ENCODE measurements at regions of chr5 and their contacts with region 1.

Region 1: DNA sequence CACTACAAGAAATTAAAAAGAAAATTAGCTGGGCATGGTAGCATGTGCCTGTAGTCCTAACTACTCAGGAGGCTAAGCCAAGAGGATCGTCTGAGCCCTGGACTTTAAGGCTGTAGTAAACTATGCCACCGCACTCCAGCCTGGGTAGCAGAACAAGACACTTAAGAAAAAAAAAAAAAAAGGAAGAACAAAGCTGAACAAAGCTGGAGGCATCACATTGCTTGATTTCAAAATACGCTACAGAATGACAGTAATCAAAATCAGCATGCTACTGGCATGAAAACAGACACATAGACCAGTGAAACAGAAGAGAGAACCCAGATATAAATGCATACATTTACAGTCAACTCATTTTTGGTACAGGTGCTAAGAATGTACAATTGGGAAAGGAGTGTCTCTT is 14.5 kb upstream of the OTULIN start:
- DNase-seq: no peak
- ATAC-seq: no peak
- H3K4me3 ChIP-seq: no peak overlapping the region
- H3K4me3 Mint-ChIP-seq: no peak overlapping the region
- H3K27ac ChIP-seq: no peak overlapping the region
- H3K27ac Mint-ChIP-seq: no peak overlapping the region
- H3K4me1 ChIP-seq: peaks cover 4% of the 10 kb centered on the region
- H3K4me1 Mint-ChIP-seq: peaks cover under 1% of the 10 kb centered on the region
- H3K27me3 ChIP-seq: no peaks in the 10 kb centered on the region
- H3K27me3 Mint-ChIP-seq: peaks cover 7% of the 10 kb centered on the region
- CTCF ChIP-seq: no peak

Region 2: GRCh38 chr5:14258840-14259239 is 391.2 kb before region 1 on chr5:
- CTCF ChIA-PET with region 1: no interaction called
- POLR2A ChIA-PET with region 1: no interaction called
- intact Hi-C with region 1: no loop called
- DNase-seq: peak in 1 of 9 experiments; percentile 18
- ATAC-seq: no peak
- H3K4me3 ChIP-seq: no peak overlapping the region
- H3K4me3 Mint-ChIP-seq: no peak overlapping the region
- H3K27ac ChIP-seq: no peak overlapping the region
- H3K27ac Mint-ChIP-seq: no peak overlapping the region
- H3K4me1 ChIP-seq: no peaks in the 10 kb centered on the region
- H3K4me1 Mint-ChIP-seq: no peaks in the 10 kb centered on the region
- H3K27me3 ChIP-seq: no peaks in the 10 kb centered on the region
- H3K27me3 Mint-ChIP-seq: no peaks in the 10 kb centered on the region
- CTCF ChIP-seq: no peak

Region 3: DNA sequence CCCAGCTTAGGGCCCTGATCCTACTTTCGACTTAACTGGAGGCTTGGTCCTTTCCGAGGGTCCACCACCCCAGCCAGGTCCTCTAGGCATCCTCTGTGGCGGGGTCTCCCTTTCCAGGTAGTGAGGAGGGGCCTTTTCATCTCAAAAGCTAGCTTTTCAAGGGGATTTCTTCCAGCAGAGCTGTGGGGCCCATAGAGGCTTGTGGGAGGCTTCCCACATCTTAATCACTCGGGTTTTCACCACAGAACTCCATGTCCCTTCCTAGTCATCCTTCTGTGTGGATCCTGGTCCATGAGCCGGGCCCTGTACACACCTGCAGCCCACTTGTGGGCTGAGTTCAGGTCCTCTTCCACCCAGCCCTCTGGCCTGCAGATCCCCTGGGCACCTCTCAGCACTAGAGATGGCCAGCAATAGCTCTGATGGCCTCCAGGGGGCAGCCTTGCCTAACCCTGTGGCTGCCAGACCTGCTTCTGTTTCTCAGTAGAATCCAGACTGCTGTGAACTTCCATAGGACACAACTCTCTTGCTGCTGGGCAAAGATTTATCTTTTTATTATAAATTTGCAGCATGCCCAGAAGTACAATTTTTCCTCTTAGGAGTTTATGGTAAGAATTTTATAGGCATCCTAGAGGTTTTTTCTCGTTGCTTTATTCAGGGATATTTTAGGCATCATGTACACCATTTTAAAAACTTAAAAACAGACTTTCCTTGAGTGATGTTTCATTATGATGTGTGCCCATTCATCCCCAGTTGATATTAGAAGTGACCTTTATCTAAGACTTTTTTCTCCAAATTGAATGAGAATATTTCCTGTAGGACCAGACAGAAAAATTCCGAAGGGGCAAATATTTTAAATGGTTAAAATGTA is 298.0 kb before region 1 on chr5:
- CTCF ChIA-PET with region 1: interaction called, 283 read pairs
- POLR2A ChIA-PET with region 1: no interaction called
- intact Hi-C with region 1: loop called (anchors 1 kb)
- DNase-seq: peak; percentile 26 to 76 (median 59)
- ATAC-seq: peak; percentile 95
- H3K4me3 ChIP-seq: no peak overlapping the region
- H3K4me3 Mint-ChIP-seq: no peak overlapping the region
- H3K27ac ChIP-seq: no peak overlapping the region
- H3K27ac Mint-ChIP-seq: no peak overlapping the region
- H3K4me1 ChIP-seq: no peaks in the 10 kb centered on the region
- H3K4me1 Mint-ChIP-seq: no peaks in the 10 kb centered on the region
- H3K27me3 ChIP-seq: no peaks in the 10 kb centered on the region
- H3K27me3 Mint-ChIP-seq: peaks cover 3% of the 10 kb centered on the region
- CTCF ChIP-seq: peak; percentile 87

Region 4: DNA sequence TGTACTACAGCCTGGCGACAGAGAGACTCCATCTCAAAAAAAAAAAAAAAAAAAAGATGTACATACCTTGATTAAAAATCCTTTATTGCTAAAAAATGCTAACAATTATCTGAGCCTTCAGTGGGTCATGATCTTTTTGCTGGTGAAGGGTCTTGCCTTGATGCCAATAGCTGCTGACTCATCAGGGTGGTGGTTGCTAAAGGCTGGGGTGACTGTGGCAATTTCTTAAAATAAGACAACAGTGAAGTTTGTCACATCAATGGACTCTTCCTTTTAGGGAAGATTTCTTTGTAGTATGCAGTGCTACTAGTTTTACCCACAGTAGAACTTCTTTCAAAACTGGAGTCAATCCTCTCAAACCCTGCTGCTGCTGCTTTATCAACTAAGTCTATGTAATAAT is 102.4 kb before region 1 on chr5:
- CTCF ChIA-PET with region 1: no interaction called
- POLR2A ChIA-PET with region 1: no interaction called
- intact Hi-C with region 1: no loop called
- DNase-seq: no peak
- ATAC-seq: no peak
- H3K4me3 ChIP-seq: no peak overlapping the region
- H3K4me3 Mint-ChIP-seq: no peak overlapping the region
- H3K27ac ChIP-seq: no peak overlapping the region
- H3K27ac Mint-ChIP-seq: no peak overlapping the region
- H3K4me1 ChIP-seq: no peaks in the 10 kb centered on the region
- H3K4me1 Mint-ChIP-seq: peaks cover 6% of the 10 kb centered on the region
- H3K27me3 ChIP-seq: peaks cover 0 to 2% of the 10 kb centered on the region in 2 experiments
- H3K27me3 Mint-ChIP-seq: peaks cover 8% of the 10 kb centered on the region
- CTCF ChIP-seq: no peak

Region 5: GRCh38 chr5:14669975-14670374 is 19.9 kb after region 1 on chr5:
- CTCF ChIA-PET with region 1: interaction called, 13 read pairs
- POLR2A ChIA-PET with region 1: interaction called, 4 read pairs
- intact Hi-C with region 1: no loop called
- DNase-seq: peak in 2 of 9 experiments; percentile 38 to 56
- ATAC-seq: no peak
- H3K4me3 ChIP-seq: no peak overlapping the region
- H3K4me3 Mint-ChIP-seq: peak overlapping the region; percentile 40
- H3K27ac ChIP-seq: no peak overlapping the region
- H3K27ac Mint-ChIP-seq: peak overlapping the region; percentile 34
- H3K4me1 ChIP-seq: peaks cover 81% of the 10 kb centered on the region
- H3K4me1 Mint-ChIP-seq: peaks cover 87% of the 10 kb centered on the region
- H3K27me3 ChIP-seq: no peaks in the 10 kb centered on the region
- H3K27me3 Mint-ChIP-seq: no peaks in the 10 kb centered on the region
- CTCF ChIP-seq: no peak

Region 6: DNA sequence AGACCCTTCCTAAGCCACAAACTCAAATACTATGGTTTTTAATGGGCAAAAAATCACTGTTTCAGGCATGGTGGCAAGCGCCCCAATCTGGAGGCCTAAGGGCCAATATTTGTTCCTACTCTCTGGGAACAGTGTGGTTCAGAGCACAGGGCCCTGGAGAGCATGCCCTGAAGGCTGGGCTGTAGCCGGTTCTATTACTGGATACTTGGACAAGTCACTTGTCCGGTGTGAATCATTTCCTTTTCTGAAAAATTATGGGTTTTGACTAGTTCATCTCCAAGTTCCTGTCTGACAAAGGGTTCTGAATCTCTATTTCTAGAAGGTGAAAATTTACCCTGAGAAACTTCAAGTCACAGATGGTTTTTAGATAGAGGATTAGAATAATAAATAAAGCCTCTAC is 89.5 kb after region 1 on chr5:
- CTCF ChIA-PET with region 1: no interaction called
- POLR2A ChIA-PET with region 1: no interaction called
- intact Hi-C with region 1: no loop called
- DNase-seq: no peak
- ATAC-seq: no peak
- H3K4me3 ChIP-seq: no peak overlapping the region
- H3K4me3 Mint-ChIP-seq: no peak overlapping the region
- H3K27ac ChIP-seq: no peak overlapping the region
- H3K27ac Mint-ChIP-seq: no peak overlapping the region
- H3K4me1 ChIP-seq: peaks cover 10% of the 10 kb centered on the region
- H3K4me1 Mint-ChIP-seq: peaks cover 24% of the 10 kb centered on the region
- H3K27me3 ChIP-seq: no peaks in the 10 kb centered on the region
- H3K27me3 Mint-ChIP-seq: no peaks in the 10 kb centered on the region
- CTCF ChIP-seq: no peak

Region 7: GRCh38 chr5:15550502-15551112 is 900.6 kb after region 1 on chr5:
- CTCF ChIA-PET with region 1: no interaction called
- POLR2A ChIA-PET with region 1: no interaction called
- intact Hi-C with region 1: no loop called
- DNase-seq: no peak
- ATAC-seq: no peak
- H3K4me3 ChIP-seq: no peak overlapping the region
- H3K4me3 Mint-ChIP-seq: no peak overlapping the region
- H3K27ac ChIP-seq: no peak overlapping the region
- H3K27ac Mint-ChIP-seq: no peak overlapping the region
- H3K4me1 ChIP-seq: no peaks in the 10 kb centered on the region
- H3K4me1 Mint-ChIP-seq: no peaks in the 10 kb centered on the region
- H3K27me3 ChIP-seq: no peaks in the 10 kb centered on the region
- H3K27me3 Mint-ChIP-seq: no peaks in the 10 kb centered on the region
- CTCF ChIP-seq: no peak